A673 (cell line): ENCODE measurements at regions of chr5 and their contacts with region 1.

Region 1: GRCh38 chr5:33969572-33970452 is 14.7 kb downstream of the SLC45A2 start:
- DNase-seq: peak; percentile 60
- H3K4me3 ChIP-seq: no peak overlapping the region
- H3K27ac ChIP-seq: no peak overlapping the region
- H3K4me1 ChIP-seq: no peaks in the 10 kb centered on the region
- H3K27me3 ChIP-seq: no peaks in the 10 kb centered on the region
- CTCF ChIP-seq: peak; percentile 85

Region 2: DNA sequence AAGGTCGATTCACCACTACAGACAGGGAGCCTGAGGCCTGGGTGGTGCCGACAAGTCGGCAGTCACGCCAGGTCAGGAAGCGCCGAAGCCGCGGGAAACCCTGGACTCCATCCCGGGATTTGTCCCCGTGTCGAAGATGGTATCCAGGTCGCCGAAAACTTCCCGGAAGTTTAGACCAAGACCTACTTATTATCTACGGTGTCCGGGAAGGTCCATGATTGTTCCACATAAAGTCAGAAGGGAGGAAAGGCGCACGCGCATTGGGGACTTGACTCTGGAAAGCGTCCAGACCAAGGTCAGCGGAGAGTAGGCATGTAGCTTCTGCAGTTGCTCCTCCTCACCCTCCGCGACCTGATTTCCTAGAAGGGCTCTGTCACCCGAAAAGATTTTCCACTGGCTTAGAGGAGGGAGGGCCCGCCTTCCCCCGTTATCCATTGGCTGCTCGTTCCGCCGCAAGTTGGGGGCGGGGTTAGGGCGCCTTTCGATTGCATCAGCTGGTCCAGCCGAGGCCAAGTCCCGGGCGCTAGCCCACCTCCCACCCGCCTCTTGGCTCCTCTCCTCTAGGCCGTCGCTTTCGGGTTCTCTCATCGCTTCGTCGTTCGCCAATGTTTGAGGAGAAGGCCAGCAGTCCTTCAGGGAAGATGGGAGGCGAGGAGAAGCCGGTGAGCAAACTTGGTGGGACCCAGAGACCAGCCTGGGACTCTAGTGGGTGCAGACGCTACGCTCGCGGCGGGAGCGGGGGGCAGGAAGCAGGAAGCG is 529.2 kb before region 1 on chr5 and contains the start of gene TARS1:
- CTCF ChIA-PET with region 1: interaction called, 17 read pairs
- POLR2A ChIA-PET with region 1: no interaction called
- intact Hi-C with region 1: loop called (anchors 1 kb)
- DNase-seq: peak; percentile 99
- H3K4me3 ChIP-seq: peak within 1 kb of the TSS; percentile 74
- H3K27ac ChIP-seq: peak within 1 kb of the TSS; percentile 96
- H3K4me1 ChIP-seq: peaks cover 17% of the 10 kb centered on the region
- H3K27me3 ChIP-seq: no peaks in the 10 kb centered on the region
- CTCF ChIP-seq: no peak
- total RNA-seq, gene TARS1: 324 and 333 TPM in 2 replicates

Region 3: DNA sequence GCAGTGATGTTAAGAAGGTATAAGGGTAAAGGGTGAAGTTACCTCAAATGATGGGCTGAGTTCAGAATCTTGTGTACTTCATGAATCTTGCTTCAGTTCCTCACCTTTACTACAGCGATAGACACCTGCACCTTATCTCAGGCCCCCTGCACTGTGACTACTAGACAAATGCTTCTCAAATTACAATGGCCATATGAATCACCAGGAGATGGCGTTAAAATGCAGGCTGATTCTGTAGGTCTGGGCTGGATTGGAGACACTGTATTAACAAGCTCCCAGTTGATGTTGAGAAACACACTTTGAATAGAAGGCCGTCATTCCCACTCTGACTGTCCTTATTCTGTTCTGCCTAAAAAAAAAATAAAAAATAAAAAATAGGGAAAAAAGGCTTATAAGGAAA is 499.3 kb before region 1 on chr5:
- CTCF ChIA-PET with region 1: interaction called, 31 read pairs
- POLR2A ChIA-PET with region 1: no interaction called
- intact Hi-C with region 1: loop called (anchors 2 kb)
- DNase-seq: peak; percentile 73
- H3K4me3 ChIP-seq: no peak overlapping the region
- H3K27ac ChIP-seq: no peak overlapping the region
- H3K4me1 ChIP-seq: peaks cover 6% of the 10 kb centered on the region
- H3K27me3 ChIP-seq: no peaks in the 10 kb centered on the region
- CTCF ChIP-seq: peak; percentile 80